Calu3 (cell line): ENCODE measurements at regions of chr15 and their contacts with region 1.

Region 1: DNA sequence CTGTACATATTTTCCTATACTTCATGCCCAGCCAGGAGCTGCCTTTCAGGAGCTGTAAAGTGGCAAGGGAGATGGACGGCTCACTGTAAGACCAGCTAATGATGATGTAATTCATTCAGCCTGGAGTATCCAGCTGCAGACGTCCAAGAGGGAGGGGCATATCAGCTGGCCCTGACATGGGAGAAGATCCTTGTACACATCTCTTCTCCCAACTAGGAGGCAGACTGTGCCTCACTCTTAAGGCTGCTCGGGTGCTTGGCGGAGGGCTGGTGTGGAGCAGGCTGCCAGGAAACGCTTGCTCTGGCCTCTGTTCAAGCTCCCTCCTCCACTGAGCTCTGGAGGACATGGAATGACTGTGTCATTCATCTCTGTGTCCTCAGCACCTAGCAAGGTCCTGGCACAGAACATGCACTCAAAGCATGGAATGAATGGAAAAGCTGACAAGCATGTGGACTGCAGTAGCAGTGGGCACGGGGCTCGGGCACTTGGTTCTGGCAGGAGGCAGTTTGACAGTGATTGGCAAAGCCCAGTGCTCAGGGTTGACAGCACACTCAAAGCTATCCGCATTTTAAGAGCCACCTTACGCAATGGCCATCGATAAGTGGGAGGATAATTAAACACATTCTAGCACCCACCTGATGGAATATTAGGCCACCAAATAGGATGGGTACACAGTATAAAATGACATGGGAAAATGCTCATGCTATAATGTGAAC is 72.4 kb downstream of the TBC1D2B start:
- DNase-seq: no peak
- H3K4me3 Mint-ChIP-seq: no peak overlapping the region
- H3K27ac Mint-ChIP-seq: no peak overlapping the region
- H3K4me1 Mint-ChIP-seq: peaks cover 27% of the 10 kb centered on the region
- H3K27me3 Mint-ChIP-seq: no peaks in the 10 kb centered on the region
- CTCF ChIP-seq: no peak

Region 2: GRCh38 chr15:77966540-77967290 is 38.4 kb before region 1 on chr15:
- CTCF ChIA-PET with region 1: no interaction called
- intact Hi-C with region 1: loop called (anchors 1 kb)
- DNase-seq: peak; percentile 77
- H3K4me3 Mint-ChIP-seq: no peak overlapping the region
- H3K27ac Mint-ChIP-seq: no peak overlapping the region
- H3K4me1 Mint-ChIP-seq: peaks cover 12% of the 10 kb centered on the region
- H3K27me3 Mint-ChIP-seq: peaks cover 22% of the 10 kb centered on the region
- CTCF ChIP-seq: peak; percentile 80

Region 3: GRCh38 chr15:78065284-78065872 is 60.3 kb after region 1 on chr15:
- CTCF ChIA-PET with region 1: interaction called, 6 read pairs
- intact Hi-C with region 1: loop called (anchors 5 kb)
- DNase-seq: no peak
- H3K4me3 Mint-ChIP-seq: no peak overlapping the region
- H3K27ac Mint-ChIP-seq: no peak overlapping the region
- H3K4me1 Mint-ChIP-seq: no peaks in the 10 kb centered on the region
- H3K27me3 Mint-ChIP-seq: no peaks in the 10 kb centered on the region
- CTCF ChIP-seq: no peak